ENCODE measurements at regions of chr1 and their contacts with region 1.

Region 1: GRCh38 chr1:35715568-35716002 is 3.1 kb downstream of the C1orf216 start:
- H3K4me3 ChIP-seq: no peak overlapping the region
- H3K27ac ChIP-seq: no peak overlapping the region
- H3K4me1 ChIP-seq: no peaks in the 10 kb centered on the region
- CTCF ChIP-seq: peak; percentile 92

Region 2: GRCh38 chr1:35533586-35533985 is 182.0 kb before region 1 on chr1:
- CTCF ChIA-PET with region 1: no interaction called
- POLR2A ChIA-PET with region 1: no interaction called
- H3K4me3 ChIP-seq: no peak overlapping the region
- H3K27ac ChIP-seq: no peak overlapping the region
- H3K4me1 ChIP-seq: peaks cover 3% of the 10 kb centered on the region
- CTCF ChIP-seq: no peak

Region 3: DNA sequence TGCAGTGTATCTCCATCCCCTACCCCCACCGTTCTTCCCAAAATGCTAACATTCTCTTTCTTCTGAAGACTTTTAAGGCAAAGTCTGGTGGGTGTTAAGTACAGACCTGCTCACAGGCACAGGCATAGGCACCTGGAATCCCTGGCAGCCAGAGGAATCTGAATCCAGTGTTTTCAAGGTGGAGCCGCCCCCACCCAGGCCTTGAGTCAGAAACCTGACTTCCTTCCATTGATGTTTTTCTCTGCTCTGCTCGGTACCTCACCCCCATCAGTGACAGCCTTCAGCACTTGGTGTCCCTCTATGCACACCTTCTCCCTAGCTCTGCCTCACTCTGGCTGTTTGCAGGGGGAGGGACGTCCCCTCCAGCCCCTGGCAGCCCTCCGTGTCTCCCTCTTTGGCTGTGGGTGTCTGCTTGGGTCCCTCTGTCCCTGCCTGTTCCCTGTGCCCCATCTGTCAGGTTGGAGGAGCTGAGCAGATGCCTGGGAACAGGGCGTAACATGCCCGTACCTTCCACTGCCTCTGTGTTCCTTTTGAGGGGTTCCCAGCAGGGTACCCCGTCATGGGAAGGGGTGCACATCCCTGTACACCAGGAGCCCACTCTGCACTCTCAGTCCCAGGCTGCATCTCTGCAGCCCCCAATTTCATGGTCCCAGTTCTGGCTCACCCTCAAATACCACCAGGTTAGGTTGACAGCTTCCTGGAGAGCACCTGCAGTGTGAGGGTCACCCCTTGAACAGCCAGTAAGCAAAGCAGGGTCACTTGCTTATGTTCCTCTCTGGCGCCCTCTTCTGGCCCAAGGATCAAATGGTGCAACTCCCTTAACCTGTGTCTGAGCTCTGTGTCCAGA is 151.3 kb before region 1 on chr1:
- CTCF ChIA-PET with region 1: interaction called, 56 read pairs
- POLR2A ChIA-PET with region 1: interaction called, 10 read pairs
- H3K4me3 ChIP-seq: no peak overlapping the region
- H3K27ac ChIP-seq: no peak overlapping the region
- H3K4me1 ChIP-seq: no peaks in the 10 kb centered on the region
- CTCF ChIP-seq: peak; percentile 64

Region 4: DNA sequence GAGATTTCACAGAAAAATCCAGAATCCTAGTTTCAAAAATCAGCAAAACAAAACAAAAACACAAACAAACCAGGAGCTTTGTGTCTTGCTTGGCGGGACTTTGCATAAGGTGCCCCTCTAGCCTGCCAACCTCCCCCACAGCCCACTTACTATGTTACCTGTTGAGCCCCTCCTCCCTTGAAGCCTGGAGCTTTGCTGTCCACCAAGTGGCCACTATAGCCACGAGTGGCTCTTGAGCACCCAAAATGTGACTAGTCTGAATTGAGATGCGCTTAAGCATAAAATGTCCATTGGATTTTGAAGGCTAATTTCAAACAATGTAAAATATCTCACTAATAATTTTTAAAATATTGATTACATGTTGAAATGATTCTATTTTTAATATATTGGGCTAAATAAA is 130.3 kb before region 1 on chr1:
- CTCF ChIA-PET with region 1: interaction called, 13 read pairs
- POLR2A ChIA-PET with region 1: no interaction called
- H3K4me3 ChIP-seq: no peak overlapping the region
- H3K27ac ChIP-seq: no peak overlapping the region
- H3K4me1 ChIP-seq: no peaks in the 10 kb centered on the region
- CTCF ChIP-seq: no peak

Region 5: DNA sequence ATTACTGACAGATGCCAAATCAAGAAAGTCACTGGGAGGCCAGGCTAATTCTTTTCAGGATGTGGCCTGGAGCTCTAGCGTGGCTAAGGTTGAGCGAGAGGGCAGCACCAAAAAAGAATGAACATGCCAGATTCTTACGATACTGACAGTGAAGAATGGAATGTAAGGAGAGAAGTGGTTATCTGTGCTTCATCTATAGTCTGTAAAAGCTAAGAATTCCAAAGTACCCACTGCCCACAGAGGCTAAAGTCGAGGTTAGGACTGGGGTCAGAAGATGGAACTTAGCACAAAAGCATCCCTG is 109.8 kb before region 1 on chr1:
- CTCF ChIA-PET with region 1: interaction called, 14 read pairs
- POLR2A ChIA-PET with region 1: interaction called, 10 read pairs
- H3K4me3 ChIP-seq: no peak overlapping the region
- H3K27ac ChIP-seq: no peak overlapping the region
- H3K4me1 ChIP-seq: no peaks in the 10 kb centered on the region
- CTCF ChIP-seq: no peak

Region 6: GRCh38 chr1:35702508-35702907 is 13.1 kb before region 1 on chr1:
- CTCF ChIA-PET with region 1: interaction called, 31 read pairs
- POLR2A ChIA-PET with region 1: no interaction called
- H3K4me3 ChIP-seq: no peak overlapping the region
- H3K27ac ChIP-seq: no peak overlapping the region
- H3K4me1 ChIP-seq: no peaks in the 10 kb centered on the region
- CTCF ChIP-seq: no peak

Region 7: GRCh38 chr1:35769759-35770446 is 54.3 kb after region 1 on chr1 and contains the start of gene CLSPN:
- CTCF ChIA-PET with region 1: interaction called, 7 read pairs
- POLR2A ChIA-PET with region 1: interaction called, 17 read pairs
- H3K4me3 ChIP-seq: peak within 1 kb of the TSS; percentile 77
- H3K27ac ChIP-seq: peak within 1 kb of the TSS; percentile 97
- H3K4me1 ChIP-seq: no peaks in the 10 kb centered on the region
- CTCF ChIP-seq: no peak